Mammary epithelial cell (primary cell): ENCODE measurements at regions of chr11 and their contacts with region 1.

Region 1: GRCh38 chr11:66183494-66184048 is 84.9 kb upstream of the RAB1B start:
- DNase-seq: no peak
- H3K4me3 ChIP-seq: no peak overlapping the region
- H3K27ac ChIP-seq: no peak overlapping the region
- H3K4me1 ChIP-seq: peaks cover 4% of the 10 kb centered on the region
- H3K27me3 ChIP-seq: no peaks in the 10 kb centered on the region
- CTCF ChIP-seq: no peak

Region 2: DNA sequence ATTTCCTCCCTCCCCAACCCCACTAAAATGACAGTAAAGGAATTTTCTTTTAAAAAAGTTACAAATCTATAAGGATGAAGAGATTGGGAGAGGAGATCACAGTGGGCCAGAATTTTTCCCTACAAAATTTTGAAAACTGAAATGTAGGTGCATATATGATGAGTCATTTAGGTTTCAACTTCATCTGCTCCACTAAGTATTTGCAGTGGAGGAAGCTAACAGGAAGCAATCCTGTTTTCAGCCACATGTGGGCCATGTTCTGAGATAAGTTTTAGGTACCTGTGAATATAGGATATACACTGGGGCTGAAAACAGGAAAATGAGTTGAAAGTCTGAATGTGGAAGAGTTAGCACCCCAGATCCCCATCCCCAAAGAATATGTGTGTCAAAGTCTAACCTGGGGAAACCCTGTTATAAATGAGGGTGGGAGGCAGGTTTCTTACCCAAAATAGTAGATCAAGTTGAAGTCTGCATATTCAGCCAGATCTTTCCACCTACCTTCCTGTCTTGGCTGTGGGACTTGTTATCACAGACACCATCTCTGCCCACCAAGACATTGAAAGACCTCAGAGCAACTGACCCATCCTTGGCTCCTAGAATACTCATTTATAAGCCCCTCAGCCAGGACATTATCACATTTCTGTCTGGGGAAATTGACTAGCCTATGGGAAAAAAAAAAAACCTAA is 26.2 kb before region 1 on chr11:
- CTCF ChIA-PET with region 1: no interaction called
- dilution Hi-C with region 1: no loop called
- in situ Hi-C with region 1: no loop called
- intact Hi-C with region 1: no loop called
- DNase-seq: no peak
- H3K4me3 ChIP-seq: no peak overlapping the region
- H3K27ac ChIP-seq: no peak overlapping the region
- H3K4me1 ChIP-seq: no peaks in the 10 kb centered on the region
- H3K27me3 ChIP-seq: no peaks in the 10 kb centered on the region
- CTCF ChIP-seq: no peak

Region 3: GRCh38 chr11:66251809-66252208 is 68.2 kb after region 1 on chr11:
- CTCF ChIA-PET with region 1: no interaction called
- dilution Hi-C with region 1: loop called (anchors 5 kb)
- in situ Hi-C with region 1: no loop called
- intact Hi-C with region 1: no loop called
- DNase-seq: no peak
- H3K4me3 ChIP-seq: no peak overlapping the region
- H3K27ac ChIP-seq: no peak overlapping the region
- H3K4me1 ChIP-seq: peaks cover 3% of the 10 kb centered on the region
- H3K27me3 ChIP-seq: no peaks in the 10 kb centered on the region
- CTCF ChIP-seq: no peak

Region 4: GRCh38 chr11:66568124-66568916 is 384.7 kb after region 1 on chr11 and contains the start of gene CTSF:
- CTCF ChIA-PET with region 1: no interaction called
- dilution Hi-C with region 1: no loop called
- in situ Hi-C with region 1: no loop called
- intact Hi-C with region 1: no loop called
- DNase-seq: peak; percentile 62
- H3K4me3 ChIP-seq: peak within 1 kb of the TSS; percentile 27 to 50 (median 41)
- H3K27ac ChIP-seq: no peak within 1 kb of the TSS
- H3K4me1 ChIP-seq: peaks cover 8% of the 10 kb centered on the region
- H3K27me3 ChIP-seq: no peaks in the 10 kb centered on the region
- CTCF ChIP-seq: no peak
- total RNA-seq, gene CTSF: 5.3 to 16.5 TPM